AG04450 (cell line): ENCODE measurements at regions of chr1 and their contacts with region 1.

Region 1: DNA sequence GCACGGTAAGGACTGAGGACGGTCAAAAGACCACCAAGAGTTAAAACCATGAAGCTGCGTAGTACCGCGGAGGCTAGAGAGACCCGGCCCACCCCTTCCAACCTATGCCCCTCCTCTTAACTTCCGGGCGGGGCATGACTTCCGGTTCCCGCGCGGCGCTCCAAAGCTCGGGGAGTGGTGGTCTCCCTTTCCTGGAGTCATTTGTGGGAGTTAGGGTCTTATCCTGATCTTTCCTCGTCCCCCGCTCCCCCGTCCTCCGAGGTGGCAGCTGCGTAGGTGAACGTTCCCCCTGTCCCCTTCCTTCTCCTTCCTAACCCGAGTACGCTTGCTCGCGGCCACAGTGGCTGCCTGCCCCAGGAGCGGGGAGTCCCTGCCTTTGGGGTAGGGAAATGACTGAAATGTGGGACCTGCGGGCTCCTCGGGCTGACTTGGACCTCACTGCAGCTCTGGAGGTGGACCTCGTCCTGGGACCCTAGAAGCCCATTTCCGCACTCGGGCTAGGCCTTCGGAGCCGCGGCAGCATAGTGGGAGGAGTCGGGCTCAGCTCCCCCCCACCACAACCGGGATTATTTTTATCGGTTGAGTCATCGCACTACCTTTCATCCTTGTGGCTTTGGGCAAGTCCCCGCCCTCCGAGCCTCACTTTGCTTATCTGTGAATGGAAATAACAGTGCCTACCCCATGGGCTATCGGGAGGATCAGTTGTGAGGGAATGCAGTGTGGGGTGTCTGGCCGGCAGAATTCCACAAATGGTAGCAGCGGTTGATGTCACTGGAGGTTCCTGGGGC is 24.1 kb downstream of the CELA3A start:
- DNase-seq: peak; percentile 59
- H3K4me3 ChIP-seq: peak overlapping the region; percentile 100
- H3K27ac ChIP-seq: peak overlapping the region; percentile 99
- H3K27me3 ChIP-seq: no peaks in the 10 kb centered on the region
- CTCF ChIP-seq: no peak

Region 2: GRCh38 chr1:21706151-21706835 is 319.3 kb before region 1 on chr1:
- CTCF ChIA-PET with region 1: interaction called, 14 read pairs
- POLR2A ChIA-PET with region 1: no interaction called
- DNase-seq: no peak
- H3K4me3 ChIP-seq: no peak overlapping the region
- H3K27ac ChIP-seq: no peak overlapping the region
- H3K27me3 ChIP-seq: no peaks in the 10 kb centered on the region
- CTCF ChIP-seq: no peak

Region 3: DNA sequence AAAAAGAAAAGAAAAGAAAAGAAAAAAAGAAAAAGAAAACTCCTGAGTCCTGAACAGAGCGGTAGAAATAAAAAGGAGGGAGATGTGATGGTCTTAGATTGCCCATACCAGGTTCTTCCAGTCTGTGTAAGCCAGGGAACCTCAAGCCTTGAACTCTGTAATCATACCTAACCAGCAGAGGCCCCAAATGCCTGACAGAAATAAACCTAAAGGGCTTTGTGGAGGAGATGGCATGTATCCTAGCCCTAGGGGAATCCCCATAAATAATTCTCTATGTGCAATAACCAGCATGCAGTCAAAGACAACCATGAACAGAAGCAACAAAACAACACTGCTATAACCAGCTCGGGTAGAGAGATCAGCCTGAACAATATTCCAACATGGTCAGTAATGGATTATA is 283.0 kb before region 1 on chr1:
- CTCF ChIA-PET with region 1: interaction called, 12 read pairs
- POLR2A ChIA-PET with region 1: no interaction called
- DNase-seq: peak; percentile 6
- H3K4me3 ChIP-seq: no peak overlapping the region
- H3K27ac ChIP-seq: no peak overlapping the region
- H3K27me3 ChIP-seq: no peaks in the 10 kb centered on the region
- CTCF ChIP-seq: no peak

Region 4: GRCh38 chr1:21882669-21883415 is 142.7 kb before region 1 on chr1:
- CTCF ChIA-PET with region 1: no interaction called
- POLR2A ChIA-PET with region 1: no interaction called
- DNase-seq: no peak
- H3K4me3 ChIP-seq: no peak overlapping the region
- H3K27ac ChIP-seq: no peak overlapping the region
- H3K27me3 ChIP-seq: no peaks in the 10 kb centered on the region
- CTCF ChIP-seq: no peak

Region 5: GRCh38 chr1:22052115-22053016 is 26.8 kb after region 1 on chr1 and contains the start of gene CDC42:
- CTCF ChIA-PET with region 1: no interaction called
- POLR2A ChIA-PET with region 1: interaction called, 22 read pairs
- DNase-seq: peak; percentile 89
- H3K4me3 ChIP-seq: peak within 1 kb of the TSS; percentile 95
- H3K27ac ChIP-seq: peak within 1 kb of the TSS; percentile 85
- H3K27me3 ChIP-seq: no peaks in the 10 kb centered on the region
- CTCF ChIP-seq: no peak
- polyA plus RNA-seq, gene CDC42: 345 and 400 TPM in 2 replicates